B cell (primary cell): ENCODE measurements at regions of chr1 and their contacts with region 1.

Region 1: DNA sequence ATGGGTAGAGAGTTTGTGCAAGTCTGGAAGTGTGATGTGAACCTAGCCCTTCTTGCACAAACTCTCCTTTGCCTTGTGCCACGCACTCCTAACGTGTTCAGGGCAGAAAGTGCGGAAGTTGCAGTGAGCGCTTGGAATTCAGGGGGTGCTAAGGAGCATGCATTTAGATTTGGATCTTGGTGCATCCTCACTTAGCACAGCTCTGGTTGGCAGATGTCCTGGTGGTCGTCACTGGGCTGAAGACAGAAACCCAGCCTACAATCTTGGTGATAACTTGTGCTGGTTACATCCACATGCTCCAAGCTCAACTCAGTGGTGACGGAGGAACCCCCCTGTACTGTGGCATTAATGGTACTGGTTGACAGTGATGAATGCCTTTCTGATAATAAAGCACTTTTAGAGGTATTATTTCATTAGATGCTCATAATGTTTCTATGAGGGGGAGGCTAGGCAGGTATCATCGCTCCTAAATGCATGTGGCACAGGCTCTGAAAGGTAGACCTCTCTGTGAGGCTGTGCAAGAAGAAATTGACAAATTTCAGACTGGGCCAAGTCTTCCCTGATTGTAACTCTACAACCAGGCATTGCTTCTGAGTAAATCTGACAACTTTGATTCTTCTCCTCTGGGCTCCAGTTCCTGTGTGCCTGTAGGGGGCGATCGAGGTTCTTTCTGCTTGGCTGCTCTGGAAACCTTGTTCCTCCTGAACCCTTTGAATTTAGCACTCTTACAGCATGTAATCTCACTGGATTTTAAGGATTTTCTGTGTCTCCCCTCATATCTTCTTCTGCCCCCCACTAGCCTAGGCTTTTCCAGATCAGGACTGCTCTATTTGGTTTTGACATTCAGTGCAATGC is 40.6 kb downstream of the MAPKAPK2 start:
- DNase-seq: peak; percentile 68
- ATAC-seq: peak; percentile 46
- H3K4me3 ChIP-seq: no peak overlapping the region
- H3K4me3 Mint-ChIP-seq: peak overlapping the region; percentile 18
- H3K27ac ChIP-seq: no peak overlapping the region
- H3K27ac Mint-ChIP-seq: peak overlapping the region; percentile 65
- H3K4me1 ChIP-seq: peaks cover 32 to 33% of the 10 kb centered on the region in 2 donors
- H3K4me1 Mint-ChIP-seq: peaks cover 60% of the 10 kb centered on the region
- H3K27me3 ChIP-seq: no peaks in the 10 kb centered on the region
- H3K27me3 Mint-ChIP-seq: no peaks in the 10 kb centered on the region
- CTCF ChIP-seq: peak; percentile 28

Region 2: GRCh38 chr1:206021626-206022365 is 703.5 kb before region 1 on chr1:
- CTCF ChIA-PET with region 1: no interaction called
- POLR2A ChIA-PET with region 1: no interaction called
- intact Hi-C with region 1: no loop called
- DNase-seq: no peak
- ATAC-seq: no peak
- H3K4me3 ChIP-seq: no peak overlapping the region
- H3K4me3 Mint-ChIP-seq: no peak overlapping the region
- H3K27ac ChIP-seq: no peak overlapping the region
- H3K27ac Mint-ChIP-seq: no peak overlapping the region
- H3K4me1 ChIP-seq: no peaks in the 10 kb centered on the region
- H3K4me1 Mint-ChIP-seq: no peaks in the 10 kb centered on the region
- H3K27me3 ChIP-seq: peaks cover 0 to 3% (median 0%) of the 10 kb centered on the region in 4 experiments
- H3K27me3 Mint-ChIP-seq: peaks cover 3% of the 10 kb centered on the region
- CTCF ChIP-seq: no peak

Region 3: GRCh38 chr1:206469933-206470691 is 255.2 kb before region 1 on chr1 and contains the start of gene IKBKE:
- CTCF ChIA-PET with region 1: interaction called, 4 read pairs
- POLR2A ChIA-PET with region 1: interaction called, 12 read pairs
- intact Hi-C with region 1: no loop called
- DNase-seq: peak; percentile 77
- ATAC-seq: peak; percentile 65
- H3K4me3 ChIP-seq: peak within 1 kb of the TSS; percentile 62 to 97 (median 85)
- H3K4me3 Mint-ChIP-seq: peak within 1 kb of the TSS; percentile 88
- H3K27ac ChIP-seq: peak within 1 kb of the TSS; percentile 63 to 75
- H3K27ac Mint-ChIP-seq: peak within 1 kb of the TSS; percentile 85
- H3K4me1 ChIP-seq: peaks cover 63 to 74% of the 10 kb centered on the region in 2 donors
- H3K4me1 Mint-ChIP-seq: peaks cover 73% of the 10 kb centered on the region
- H3K27me3 ChIP-seq: no peaks in the 10 kb centered on the region
- H3K27me3 Mint-ChIP-seq: no peaks in the 10 kb centered on the region
- CTCF ChIP-seq: peak; percentile 30
- total RNA-seq, gene IKBKE: 40.5 and 40.8 TPM in 2 replicates

Region 4: DNA sequence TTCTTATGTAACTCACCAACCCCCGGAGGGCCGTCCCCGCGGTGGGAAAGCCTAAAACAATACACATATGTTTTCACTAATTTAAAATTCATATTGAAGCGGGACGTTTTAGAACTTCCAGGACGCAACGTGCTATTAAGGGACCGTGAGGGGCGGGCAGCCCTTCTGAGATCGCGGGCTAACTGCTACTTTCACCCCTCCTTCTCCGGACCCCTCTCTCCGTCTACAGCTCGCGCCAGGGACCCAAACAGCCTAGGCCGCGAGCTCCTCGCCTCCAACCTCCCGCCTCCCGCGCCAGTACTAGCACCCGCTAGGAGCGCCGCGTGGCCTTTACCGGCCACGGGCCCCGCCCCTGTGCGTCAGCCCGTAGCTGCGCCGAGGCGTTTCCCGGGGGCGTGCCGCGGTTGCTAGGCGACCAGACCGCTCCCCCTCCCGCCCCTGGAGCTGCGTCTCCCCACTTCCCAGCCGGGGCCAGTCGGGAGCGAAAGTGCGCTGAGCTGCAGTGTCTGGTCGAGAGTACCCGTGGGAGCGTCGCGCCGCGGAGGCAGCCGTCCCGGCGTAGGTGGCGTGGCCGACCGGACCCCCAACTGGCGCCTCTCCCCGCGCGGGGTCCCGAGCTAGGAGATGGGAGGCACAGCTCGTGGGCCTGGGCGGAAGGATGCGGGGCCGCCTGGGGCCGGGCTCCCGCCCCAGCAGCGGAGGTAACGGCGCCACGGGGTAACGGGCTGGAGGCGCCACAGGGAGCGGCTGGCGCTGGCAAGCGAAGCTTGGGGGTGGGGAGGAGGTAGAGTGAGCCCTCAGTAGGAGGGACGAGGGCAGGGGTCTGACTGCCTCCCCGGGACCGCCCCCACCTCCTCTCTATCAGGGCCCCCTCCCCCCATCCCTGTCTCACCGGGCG is 90.0 kb before region 1 on chr1 and contains the start of gene DYRK3:
- CTCF ChIA-PET with region 1: interaction called, 6 read pairs
- POLR2A ChIA-PET with region 1: no interaction called
- intact Hi-C with region 1: loop called (anchors 1 kb)
- DNase-seq: peak; percentile 89
- ATAC-seq: peak; percentile 93
- H3K4me3 ChIP-seq: peak within 1 kb of the TSS; percentile 54 to 77 (median 67)
- H3K4me3 Mint-ChIP-seq: peak within 1 kb of the TSS; percentile 92
- H3K27ac ChIP-seq: no peak within 1 kb of the TSS
- H3K27ac Mint-ChIP-seq: peak within 1 kb of the TSS; percentile 74
- H3K4me1 ChIP-seq: peaks cover 17 to 22% of the 10 kb centered on the region in 2 donors
- H3K4me1 Mint-ChIP-seq: peaks cover 29% of the 10 kb centered on the region
- H3K27me3 ChIP-seq: peaks cover 0 to 11% (median 7%) of the 10 kb centered on the region in 4 experiments
- H3K27me3 Mint-ChIP-seq: peaks cover 7% of the 10 kb centered on the region
- CTCF ChIP-seq: no peak
- total RNA-seq, gene DYRK3: 0.30 and 0.80 TPM in 2 replicates

Region 5: DNA sequence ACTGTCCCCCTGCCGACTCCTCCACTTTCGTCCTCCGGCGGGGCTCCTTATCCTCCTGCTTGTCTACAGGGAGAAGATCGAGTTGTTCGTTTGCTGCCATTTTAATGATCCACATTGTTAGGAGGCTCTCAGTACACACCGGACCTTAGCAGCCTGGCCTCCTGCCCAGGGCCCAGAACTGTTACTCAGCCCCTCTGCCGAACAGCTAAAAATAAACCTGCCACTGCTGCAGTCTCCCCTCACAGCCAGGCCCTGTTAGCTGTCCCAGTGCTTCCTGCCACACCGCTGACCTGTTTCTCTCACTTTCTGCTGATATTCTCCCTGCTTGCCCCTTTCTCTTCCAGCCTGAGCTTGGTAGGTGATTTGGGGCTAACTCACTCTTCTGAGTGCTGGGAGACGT is 32.3 kb before region 1 on chr1:
- CTCF ChIA-PET with region 1: interaction called, 19 read pairs
- POLR2A ChIA-PET with region 1: no interaction called
- intact Hi-C with region 1: no loop called
- DNase-seq: no peak
- ATAC-seq: no peak
- H3K4me3 ChIP-seq: no peak overlapping the region
- H3K4me3 Mint-ChIP-seq: no peak overlapping the region
- H3K27ac ChIP-seq: no peak overlapping the region
- H3K27ac Mint-ChIP-seq: peak overlapping the region; percentile 67
- H3K4me1 ChIP-seq: peaks cover 33 to 36% of the 10 kb centered on the region in 2 donors
- H3K4me1 Mint-ChIP-seq: peaks cover 88% of the 10 kb centered on the region
- H3K27me3 ChIP-seq: no peaks in the 10 kb centered on the region
- H3K27me3 Mint-ChIP-seq: no peaks in the 10 kb centered on the region
- CTCF ChIP-seq: no peak

Region 6: GRCh38 chr1:206905280-206906164 is 180.2 kb after region 1 on chr1:
- CTCF ChIA-PET with region 1: interaction called, 11 read pairs
- POLR2A ChIA-PET with region 1: no interaction called
- intact Hi-C with region 1: no loop called
- DNase-seq: peak; percentile 62
- ATAC-seq: peak; percentile 86
- H3K4me3 ChIP-seq: no peak overlapping the region
- H3K4me3 Mint-ChIP-seq: peak overlapping the region; percentile 64
- H3K27ac ChIP-seq: peak overlapping the region; percentile 49 to 79
- H3K27ac Mint-ChIP-seq: peak overlapping the region; percentile 82
- H3K4me1 ChIP-seq: peaks cover 51 to 61% of the 10 kb centered on the region in 2 donors
- H3K4me1 Mint-ChIP-seq: peaks cover 77% of the 10 kb centered on the region
- H3K27me3 ChIP-seq: no peaks in the 10 kb centered on the region
- H3K27me3 Mint-ChIP-seq: no peaks in the 10 kb centered on the region
- CTCF ChIP-seq: no peak

Region 7: DNA sequence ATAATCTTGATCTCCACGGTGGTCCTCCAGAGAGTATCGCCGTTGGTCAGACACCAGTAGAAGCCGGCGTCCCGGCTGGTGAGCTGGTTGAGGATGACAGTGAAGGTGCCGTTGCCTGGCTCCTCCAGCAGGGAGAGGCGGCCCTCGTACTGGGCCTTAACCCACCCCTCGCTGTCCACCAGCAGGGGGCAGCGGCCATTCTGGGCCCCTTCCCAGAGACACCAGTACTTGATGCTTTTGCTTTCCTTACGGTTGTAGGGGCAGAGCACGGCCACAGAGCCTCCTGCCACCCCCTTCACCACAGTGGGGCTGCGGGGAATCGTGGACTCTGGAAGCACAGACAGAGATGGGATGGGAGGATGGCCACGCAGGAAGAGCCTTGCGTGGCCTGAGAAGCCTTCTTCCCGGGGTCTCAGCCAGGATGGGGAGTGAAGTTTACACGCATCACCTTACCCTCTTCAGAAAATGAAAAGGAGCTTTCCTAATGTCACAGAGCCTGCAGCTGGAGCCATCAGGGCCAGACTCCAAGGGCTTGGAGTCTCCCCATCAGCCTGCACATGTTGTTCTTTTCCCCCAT is 210.2 kb after region 1 on chr1:
- CTCF ChIA-PET with region 1: interaction called, 23 read pairs
- POLR2A ChIA-PET with region 1: no interaction called
- intact Hi-C with region 1: loop called (anchors 1 kb)
- DNase-seq: peak; percentile 59
- ATAC-seq: peak; percentile 14
- H3K4me3 ChIP-seq: no peak overlapping the region
- H3K4me3 Mint-ChIP-seq: no peak overlapping the region
- H3K27ac ChIP-seq: no peak overlapping the region
- H3K27ac Mint-ChIP-seq: no peak overlapping the region
- H3K4me1 ChIP-seq: peaks cover 27 to 30% of the 10 kb centered on the region in 2 donors
- H3K4me1 Mint-ChIP-seq: peaks cover 30% of the 10 kb centered on the region
- H3K27me3 ChIP-seq: no peaks in the 10 kb centered on the region
- H3K27me3 Mint-ChIP-seq: no peaks in the 10 kb centered on the region
- CTCF ChIP-seq: peak; percentile 51